PC-3 (cell line): ENCODE measurements at regions of chr12 and their contacts with region 1.

Region 1: GRCh38 chr12:98698603-98699463 is 53.7 kb downstream of the APAF1 start:
- DNase-seq: peak; percentile 80
- ATAC-seq: peak; percentile 97
- H3K4me3 ChIP-seq: no peak overlapping the region
- H3K27ac ChIP-seq: no peak overlapping the region
- H3K4me1 ChIP-seq: no peaks in the 10 kb centered on the region; the same call in 1 of the 2 replicates
- H3K27me3 ChIP-seq: no peaks in the 10 kb centered on the region
- CTCF ChIP-seq: peak; percentile 90

Region 2: GRCh38 chr12:98736352-98737321 is 37.8 kb after region 1 on chr12:
- CTCF ChIA-PET with region 1: no interaction called
- POLR2A ChIA-PET with region 1: no interaction called
- intact Hi-C with region 1: loop called (anchors 5 kb)
- DNase-seq: peak; percentile 51
- ATAC-seq: peak; percentile 63
- H3K4me3 ChIP-seq: no peak overlapping the region
- H3K27ac ChIP-seq: no peak overlapping the region
- H3K4me1 ChIP-seq: peaks cover 31% of the 10 kb centered on the region
- H3K27me3 ChIP-seq: no peaks in the 10 kb centered on the region
- CTCF ChIP-seq: no peak

Region 3: GRCh38 chr12:98803468-98804209 is 104.8 kb after region 1 on chr12:
- CTCF ChIA-PET with region 1: interaction called, 6 read pairs
- POLR2A ChIA-PET with region 1: no interaction called
- intact Hi-C with region 1: loop called (anchors 2 kb)
- DNase-seq: no peak
- ATAC-seq: no peak
- H3K4me3 ChIP-seq: no peak overlapping the region
- H3K27ac ChIP-seq: no peak overlapping the region
- H3K4me1 ChIP-seq: peaks cover 7% of the 10 kb centered on the region; the same call in 1 of the 2 replicates
- H3K27me3 ChIP-seq: peaks cover 13% of the 10 kb centered on the region; the same call in 1 of the 2 replicates
- CTCF ChIP-seq: peak; percentile 38; the same call in 1 of the 2 replicates

Region 4: GRCh38 chr12:98939350-98939749 is 240.5 kb after region 1 on chr12:
- CTCF ChIA-PET with region 1: no interaction called
- POLR2A ChIA-PET with region 1: no interaction called
- intact Hi-C with region 1: loop called (anchors 1 kb)
- DNase-seq: peak; percentile 42
- ATAC-seq: peak; percentile 54; the same call in 1 of the 2 replicates
- H3K4me3 ChIP-seq: no peak overlapping the region
- H3K27ac ChIP-seq: no peak overlapping the region
- H3K4me1 ChIP-seq: 0 out of 2 replicates have a peak, but pooled peaks cover 3% of the 10 kb centered on the region
- H3K27me3 ChIP-seq: peaks cover 15% of the 10 kb centered on the region
- CTCF ChIP-seq: peak; percentile 77

Region 5: GRCh38 chr12:98998697-98999299 is 300.0 kb after region 1 on chr12:
- CTCF ChIA-PET with region 1: interaction called, 6 read pairs
- POLR2A ChIA-PET with region 1: no interaction called
- intact Hi-C with region 1: loop called (anchors 1 kb)
- DNase-seq: peak; percentile 79
- ATAC-seq: peak; percentile 88
- H3K4me3 ChIP-seq: no peak overlapping the region
- H3K27ac ChIP-seq: no peak overlapping the region
- H3K4me1 ChIP-seq: no peaks in the 10 kb centered on the region
- H3K27me3 ChIP-seq: peaks cover 23% of the 10 kb centered on the region
- CTCF ChIP-seq: peak; percentile 85

Region 6: GRCh38 chr12:99232324-99232723 is 533.5 kb after region 1 on chr12:
- CTCF ChIA-PET with region 1: interaction called, 10 read pairs
- POLR2A ChIA-PET with region 1: no interaction called
- intact Hi-C with region 1: no loop called
- DNase-seq: no peak
- ATAC-seq: no peak
- H3K4me3 ChIP-seq: no peak overlapping the region
- H3K27ac ChIP-seq: no peak overlapping the region
- H3K4me1 ChIP-seq: no peaks in the 10 kb centered on the region
- H3K27me3 ChIP-seq: 0 out of 2 replicates have a peak, but pooled peaks cover 7% of the 10 kb centered on the region
- CTCF ChIP-seq: no peak